Activated CD8-positive, alpha-beta T cell treated with anti-CD3 and anti-CD28 coated beads, Interleukin-2, amount 10 ng/mL, durations not matched to agents 7 days and 5 days (primary cell): ENCODE measurements at regions of chr9 and their contacts with region 1.

Region 1: GRCh38 chr9:96327694-96328352 is 25.8 kb upstream of the HSD17B3 start:
- DNase-seq: peak; percentile 55
- ATAC-seq: peak; percentile 60
- H3K4me3 Mint-ChIP-seq: no peak overlapping the region
- H3K27ac Mint-ChIP-seq: no peak overlapping the region
- H3K4me1 Mint-ChIP-seq: no peaks in the 10 kb centered on the region
- H3K27me3 Mint-ChIP-seq: peaks cover 3% of the 10 kb centered on the region

Region 2: GRCh38 chr9:96317335-96317980 is 10.4 kb before region 1 on chr9:
- CTCF ChIA-PET with region 1: interaction called, 24 read pairs
- POLR2A ChIA-PET with region 1: no interaction called
- DNase-seq: peak; percentile 43
- ATAC-seq: peak; percentile 55
- H3K4me3 Mint-ChIP-seq: no peak overlapping the region
- H3K27ac Mint-ChIP-seq: no peak overlapping the region
- H3K4me1 Mint-ChIP-seq: no peaks in the 10 kb centered on the region
- H3K27me3 Mint-ChIP-seq: peaks cover 4% of the 10 kb centered on the region

Region 3: GRCh38 chr9:96667361-96667728 is 339.5 kb after region 1 on chr9:
- CTCF ChIA-PET with region 1: interaction called, 20 read pairs
- POLR2A ChIA-PET with region 1: no interaction called
- DNase-seq: no peak
- ATAC-seq: no peak
- H3K4me3 Mint-ChIP-seq: no peak overlapping the region
- H3K27ac Mint-ChIP-seq: no peak overlapping the region
- H3K4me1 Mint-ChIP-seq: no peaks in the 10 kb centered on the region
- H3K27me3 Mint-ChIP-seq: peaks cover 1% of the 10 kb centered on the region